ENCODE measurements at regions of chr1 and their contacts with region 1.

Region 1: GRCh38 chr1:27616441-27616840 is 12.5 kb upstream of the AHDC1 start:
- DNase-seq: no peak
- ATAC-seq: no peak
- H3K4me3 Mint-ChIP-seq: no peak overlapping the region
- H3K27ac Mint-ChIP-seq: no peak overlapping the region
- H3K4me1 Mint-ChIP-seq: peaks cover 47% of the 10 kb centered on the region
- H3K27me3 Mint-ChIP-seq: no peaks in the 10 kb centered on the region

Region 2: DNA sequence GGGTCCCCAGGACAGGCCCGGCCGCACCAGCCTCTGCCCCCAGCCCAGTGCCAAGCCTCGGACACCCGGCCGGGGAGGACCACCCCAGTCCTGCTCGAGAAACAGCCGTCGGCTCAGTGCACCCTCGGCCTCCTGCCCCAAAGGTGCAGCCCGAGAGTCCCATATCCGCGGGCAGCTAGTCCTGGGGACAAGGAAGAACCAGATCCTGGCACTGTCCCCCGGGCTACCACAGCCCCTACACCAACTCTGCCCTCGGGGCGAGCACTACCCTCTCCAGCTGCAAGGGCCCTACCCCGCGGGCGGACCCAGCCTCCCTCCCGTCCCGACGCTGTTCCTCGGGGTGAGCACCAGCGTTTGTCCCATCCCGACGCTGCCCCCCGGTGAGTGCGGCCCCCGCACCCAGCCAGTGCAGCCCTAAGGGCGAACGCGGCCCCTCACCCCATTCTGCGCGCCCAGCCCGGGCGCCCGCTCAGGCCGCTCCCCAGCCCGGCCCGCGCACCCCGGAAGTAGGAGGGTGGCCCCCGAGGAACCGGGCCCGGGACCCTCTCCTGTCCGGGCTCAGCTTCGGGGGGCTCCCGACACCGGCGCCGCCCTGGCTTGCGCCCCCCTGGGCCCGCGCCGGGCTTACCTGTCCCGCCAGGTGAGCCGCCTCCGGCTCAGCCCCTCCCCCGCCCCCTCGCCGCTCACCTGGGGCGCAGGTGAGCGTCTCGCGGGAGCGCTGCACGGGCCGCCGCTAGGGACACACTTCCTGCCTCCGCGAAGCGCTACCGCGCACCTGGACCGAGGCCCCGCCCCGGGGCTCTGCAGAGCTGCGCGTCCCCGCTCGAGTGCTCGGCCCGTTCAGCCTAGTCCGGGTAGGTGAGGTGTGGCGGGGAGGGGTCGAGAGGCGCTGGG is 656.5 kb before region 1 on chr1 and contains the start of gene KDF1:
- CTCF ChIA-PET with region 1: no interaction called
- POLR2A ChIA-PET with region 1: no interaction called
- intact Hi-C with region 1: no loop called
- DNase-seq: peak; percentile 59
- ATAC-seq: peak; percentile 77
- H3K4me3 Mint-ChIP-seq: peak within 1 kb of the TSS; percentile 65
- H3K27ac Mint-ChIP-seq: no peak within 1 kb of the TSS
- H3K4me1 Mint-ChIP-seq: peaks cover 4% of the 10 kb centered on the region
- H3K27me3 Mint-ChIP-seq: peaks cover 22% of the 10 kb centered on the region
- total RNA-seq, gene KDF1: 0.30 to 0.39 TPM

Region 3: GRCh38 chr1:27445177-27445936 is 171.1 kb before region 1 on chr1:
- CTCF ChIA-PET with region 1: no interaction called
- POLR2A ChIA-PET with region 1: no interaction called
- intact Hi-C with region 1: no loop called
- DNase-seq: peak; percentile 20
- ATAC-seq: peak; percentile 74
- H3K4me3 Mint-ChIP-seq: peak overlapping the region; percentile 61
- H3K27ac Mint-ChIP-seq: peak overlapping the region; percentile 95
- H3K4me1 Mint-ChIP-seq: peaks cover 60% of the 10 kb centered on the region
- H3K27me3 Mint-ChIP-seq: no peaks in the 10 kb centered on the region

Region 4: GRCh38 chr1:27634177-27634984 is 17.9 kb after region 1 on chr1:
- CTCF ChIA-PET with region 1: interaction called, 9 read pairs
- POLR2A ChIA-PET with region 1: no interaction called
- intact Hi-C with region 1: loop called in 1 of 2 experiments (anchors 2 kb)
- DNase-seq: peak; percentile 58
- ATAC-seq: no peak
- H3K4me3 Mint-ChIP-seq: peak overlapping the region; percentile 39
- H3K27ac Mint-ChIP-seq: no peak overlapping the region
- H3K4me1 Mint-ChIP-seq: peaks cover 62% of the 10 kb centered on the region
- H3K27me3 Mint-ChIP-seq: no peaks in the 10 kb centered on the region

Region 5: GRCh38 chr1:27807385-27807784 is 190.9 kb after region 1 on chr1:
- CTCF ChIA-PET with region 1: no interaction called
- POLR2A ChIA-PET with region 1: no interaction called
- intact Hi-C with region 1: no loop called
- DNase-seq: no peak
- ATAC-seq: no peak
- H3K4me3 Mint-ChIP-seq: no peak overlapping the region
- H3K27ac Mint-ChIP-seq: no peak overlapping the region
- H3K4me1 Mint-ChIP-seq: peaks cover 4% of the 10 kb centered on the region
- H3K27me3 Mint-ChIP-seq: no peaks in the 10 kb centered on the region

Region 6: GRCh38 chr1:28359592-28360239 is 743.3 kb after region 1 on chr1:
- CTCF ChIA-PET with region 1: no interaction called
- POLR2A ChIA-PET with region 1: no interaction called
- intact Hi-C with region 1: no loop called
- DNase-seq: peak; percentile 88
- ATAC-seq: peak; percentile 78
- H3K4me3 Mint-ChIP-seq: no peak overlapping the region
- H3K27ac Mint-ChIP-seq: no peak overlapping the region
- H3K4me1 Mint-ChIP-seq: no peaks in the 10 kb centered on the region
- H3K27me3 Mint-ChIP-seq: no peaks in the 10 kb centered on the region